ENCODE measurements at regions of chr17 and their contacts with region 1.

Region 1: DNA sequence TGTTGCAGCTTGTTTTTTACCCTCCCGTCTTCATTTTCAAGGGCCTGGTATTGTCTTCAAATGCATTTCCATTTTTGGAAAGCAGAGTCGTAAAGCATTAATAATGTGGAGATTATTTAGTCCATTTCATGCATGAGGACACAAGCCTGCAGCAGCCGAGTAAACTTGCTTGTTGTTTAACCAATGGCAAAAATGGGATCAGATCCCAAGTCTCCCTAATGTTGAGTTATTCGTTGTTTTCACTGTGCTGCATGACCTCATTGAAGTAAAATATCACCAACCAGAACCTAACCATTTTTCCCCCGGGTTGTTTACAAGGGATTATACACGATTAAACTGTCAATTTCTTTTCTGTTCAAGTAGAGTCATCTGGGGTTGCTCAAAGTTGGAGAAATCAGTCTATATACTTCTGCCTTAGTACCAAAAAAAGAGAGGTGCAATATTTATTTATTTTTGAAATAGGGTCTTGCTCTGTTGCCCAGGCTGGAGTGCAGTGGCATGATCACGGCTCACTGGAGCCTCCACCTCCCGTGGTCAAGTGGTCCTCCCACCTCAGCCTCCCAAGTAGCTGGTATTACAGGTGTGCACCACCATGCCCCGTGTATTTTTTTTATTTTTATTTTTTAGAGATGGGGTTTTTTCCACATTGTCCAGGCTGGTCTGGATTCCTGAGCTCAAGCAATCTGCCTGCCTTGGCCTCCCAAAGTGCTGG is 12.4 kb downstream of the AMZ2 start:
- DNase-seq: no peak
- H3K4me3 ChIP-seq: no peak overlapping the region
- H3K27ac ChIP-seq: no peak overlapping the region
- H3K4me1 ChIP-seq: no peaks in the 10 kb centered on the region
- H3K27me3 ChIP-seq: no peaks in the 10 kb centered on the region
- CTCF ChIP-seq: no peak
- EP300 ChIP-seq: no peak
- RAD21 ChIP-seq: no peak

Region 2: DNA sequence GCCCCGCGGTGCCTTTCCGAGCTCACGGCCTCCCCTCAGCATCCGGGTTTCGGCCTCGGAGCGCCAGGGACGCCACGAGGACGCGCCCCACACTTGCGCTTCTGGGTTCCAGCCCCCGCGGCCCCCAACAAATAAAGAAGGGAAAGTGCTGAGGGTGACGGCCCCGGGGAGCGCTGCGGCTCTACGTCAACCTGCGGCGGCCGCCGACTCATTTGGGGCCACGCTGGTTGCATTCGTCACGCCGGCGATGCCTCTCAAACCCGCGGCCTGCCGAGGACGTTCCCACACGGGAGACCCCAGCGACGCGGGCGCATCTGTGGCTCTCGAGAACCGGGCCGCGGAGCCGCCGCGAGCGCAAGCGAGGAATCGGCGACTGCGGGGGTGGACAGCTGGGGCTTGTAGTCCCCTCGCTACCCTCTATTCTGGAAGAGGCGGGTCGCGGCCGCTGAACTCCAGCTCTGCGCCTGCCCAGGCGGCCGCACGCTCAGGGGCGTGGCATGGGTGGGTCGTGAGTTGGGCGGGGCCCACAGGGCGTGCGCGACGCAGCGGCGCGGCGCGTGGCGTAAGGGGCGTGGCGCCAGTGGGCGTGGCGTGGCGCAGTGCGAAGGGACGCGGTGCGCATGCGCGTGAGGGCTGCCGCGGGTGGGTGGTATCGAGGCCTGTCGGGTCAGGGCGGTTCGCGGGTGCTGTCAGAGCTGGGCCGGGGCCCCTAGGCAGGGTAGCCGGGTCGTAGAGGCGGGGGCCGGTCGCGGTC is 12.6 kb before region 1 on chr17 and contains the start of gene AMZ2:
- CTCF ChIA-PET with region 1: interaction called, 18 read pairs
- POLR2A ChIA-PET with region 1: no interaction called
- DNase-seq: peak; percentile 99
- H3K4me3 ChIP-seq: peak within 1 kb of the TSS; percentile 76 to 79
- H3K27ac ChIP-seq: peak within 1 kb of the TSS; percentile 79 to 89
- H3K4me1 ChIP-seq: peaks cover 6 to 8% of the 10 kb centered on the region in 2 experiments; a peak in 2 of 4 replicates
- H3K27me3 ChIP-seq: no peaks in the 10 kb centered on the region
- CTCF ChIP-seq: no peak
- EP300 ChIP-seq: no peak
- RAD21 ChIP-seq: no peak
- polyA plus RNA-seq, gene AMZ2: 95.9 and 115 TPM in 2 replicates

Region 3: GRCh38 chr17:68320311-68320865 is 60.2 kb after region 1 on chr17:
- CTCF ChIA-PET with region 1: no interaction called
- POLR2A ChIA-PET with region 1: no interaction called
- DNase-seq: no peak
- H3K4me3 ChIP-seq: no peak overlapping the region
- H3K27ac ChIP-seq: no peak overlapping the region
- H3K4me1 ChIP-seq: no peaks in the 10 kb centered on the region
- H3K27me3 ChIP-seq: no peaks in the 10 kb centered on the region; the same call in 1 of the 2 replicates
- CTCF ChIP-seq: no peak
- EP300 ChIP-seq: no peak
- RAD21 ChIP-seq: no peak

Region 4: DNA sequence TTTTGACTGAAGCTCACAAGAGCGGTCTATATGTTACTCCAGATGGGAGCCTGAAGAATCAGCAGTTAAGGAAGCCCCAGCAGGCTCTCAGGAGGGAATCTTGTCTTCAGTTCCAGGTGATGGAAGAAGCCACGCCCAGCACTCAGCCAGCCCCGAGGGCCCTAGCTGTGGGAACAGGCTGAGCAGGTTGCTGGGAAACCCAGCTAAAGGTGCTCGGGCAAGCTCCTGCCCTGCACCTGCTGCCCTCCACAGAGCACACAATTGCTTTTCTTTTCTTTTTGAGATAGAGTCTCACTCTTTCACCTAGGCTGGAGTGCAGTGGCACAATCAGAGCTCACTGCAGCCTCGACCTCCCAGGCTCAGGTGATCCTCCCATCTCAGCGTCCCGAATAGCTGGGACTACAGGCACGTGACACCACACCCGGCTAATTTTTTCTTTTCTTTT is 164.8 kb after region 1 on chr17:
- CTCF ChIA-PET with region 1: interaction called, 10 read pairs
- POLR2A ChIA-PET with region 1: no interaction called
- DNase-seq: no peak
- H3K4me3 ChIP-seq: no peak overlapping the region
- H3K27ac ChIP-seq: no peak overlapping the region
- H3K4me1 ChIP-seq: no peaks in the 10 kb centered on the region
- H3K27me3 ChIP-seq: no peaks in the 10 kb centered on the region
- CTCF ChIP-seq: no peak
- EP300 ChIP-seq: no peak
- RAD21 ChIP-seq: no peak

Region 5: DNA sequence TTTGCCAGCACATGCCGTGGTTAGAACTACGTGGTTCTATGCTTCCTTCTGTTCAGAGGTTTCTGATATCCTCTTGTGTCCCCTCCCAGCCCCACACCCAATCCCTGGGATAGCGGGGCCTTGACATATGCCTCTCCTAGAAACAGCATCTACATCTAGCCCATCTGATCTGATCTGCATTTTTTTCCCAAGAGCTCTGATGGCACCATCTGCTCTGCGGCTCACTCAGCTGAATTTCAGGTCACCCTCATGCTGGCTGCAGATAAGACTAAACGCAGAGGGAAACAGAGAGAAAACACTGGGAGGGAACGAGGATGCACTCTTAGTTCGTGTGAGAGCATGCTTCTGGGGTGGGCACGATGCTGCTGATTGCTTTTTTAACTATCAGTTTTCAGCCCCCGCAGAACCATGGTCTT is 186.4 kb after region 1 on chr17:
- CTCF ChIA-PET with region 1: interaction called, 11 read pairs
- POLR2A ChIA-PET with region 1: no interaction called
- DNase-seq: no peak
- H3K4me3 ChIP-seq: no peak overlapping the region
- H3K27ac ChIP-seq: no peak overlapping the region
- H3K4me1 ChIP-seq: no peaks in the 10 kb centered on the region
- H3K27me3 ChIP-seq: no peaks in the 10 kb centered on the region
- CTCF ChIP-seq: no peak
- EP300 ChIP-seq: no peak
- RAD21 ChIP-seq: no peak

Region 6: DNA sequence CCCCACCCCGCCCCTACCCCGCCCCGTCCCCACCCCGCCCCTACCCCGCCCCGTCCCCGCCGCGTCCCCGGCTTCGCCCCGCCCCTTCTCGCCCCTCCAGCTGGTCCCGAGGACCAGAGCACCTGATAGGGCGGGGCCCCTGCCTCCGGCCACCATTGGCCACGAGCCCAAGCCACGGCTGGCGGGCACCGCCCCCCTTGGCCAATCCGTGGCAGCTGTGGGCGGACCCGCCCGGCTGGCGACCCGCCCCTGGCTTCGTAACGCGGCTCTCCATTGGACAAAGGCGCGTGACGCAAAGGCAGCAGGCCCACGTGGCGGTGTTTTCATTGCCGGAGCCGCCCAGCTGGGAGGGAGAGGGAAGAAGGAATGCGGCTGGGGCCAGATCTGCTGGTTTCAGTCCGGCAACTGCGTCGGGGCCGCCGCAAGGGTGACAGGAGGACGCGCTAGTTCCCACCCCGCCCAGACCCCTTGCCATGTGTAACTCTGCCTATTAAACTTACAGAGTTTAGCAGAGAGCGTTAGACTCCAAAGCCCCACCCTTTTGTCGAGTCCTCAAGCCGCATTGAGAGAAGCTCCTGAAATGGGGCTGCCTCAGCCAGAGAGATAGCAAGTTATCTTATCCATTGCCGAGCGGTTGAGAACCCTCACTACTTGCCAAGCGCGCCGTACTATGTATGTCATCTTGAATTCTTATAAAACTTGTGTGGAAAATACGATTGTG is 197.5 kb after region 1 on chr17:
- CTCF ChIA-PET with region 1: interaction called, 35 read pairs
- POLR2A ChIA-PET with region 1: no interaction called
- DNase-seq: peak; percentile 100
- H3K4me3 ChIP-seq: peak overlapping the region; percentile 77 to 93
- H3K27ac ChIP-seq: peak overlapping the region in 1 of 2 experiments; percentile 18; a peak in 1 of 4 replicates
- H3K4me1 ChIP-seq: peaks cover 8 to 23% of the 10 kb centered on the region in 2 experiments; a peak in 3 of 4 replicates
- H3K27me3 ChIP-seq: no peaks in the 10 kb centered on the region
- CTCF ChIP-seq: no peak
- EP300 ChIP-seq: no peak
- RAD21 ChIP-seq: no peak

Region 7: DNA sequence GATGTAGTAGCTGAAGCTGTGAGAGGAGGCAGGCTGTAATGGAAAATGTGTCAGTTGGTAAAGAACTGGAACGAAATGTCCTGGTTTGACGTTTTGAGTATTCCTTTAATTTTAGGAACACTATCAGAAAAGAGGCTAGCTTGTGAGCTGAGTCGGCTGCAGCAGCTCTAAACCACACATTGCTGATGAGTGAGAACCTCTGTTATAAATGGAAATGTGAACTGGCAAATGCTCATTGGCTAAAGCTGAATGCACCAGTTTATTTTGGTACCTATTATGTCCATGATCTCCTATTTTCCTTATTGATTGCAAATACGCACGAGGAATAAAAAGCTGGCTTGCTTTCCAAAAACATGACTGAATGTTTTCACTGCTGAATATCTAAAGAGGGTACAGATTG is 208.1 kb after region 1 on chr17:
- CTCF ChIA-PET with region 1: interaction called, 60 read pairs
- POLR2A ChIA-PET with region 1: no interaction called
- DNase-seq: no peak
- H3K4me3 ChIP-seq: no peak overlapping the region
- H3K27ac ChIP-seq: no peak overlapping the region
- H3K4me1 ChIP-seq: no peaks in the 10 kb centered on the region
- H3K27me3 ChIP-seq: no peaks in the 10 kb centered on the region; the same call in 1 of the 2 replicates
- CTCF ChIP-seq: no peak
- EP300 ChIP-seq: no peak
- RAD21 ChIP-seq: no peak